ENCODE measurements at regions of chrX and their contacts with region 1.

Region 1: GRCh38 chrX:68710870-68711576 is 63.6 kb downstream of the STARD8 start:
- DNase-seq: peak; percentile 53
- ATAC-seq: peak; percentile 70
- H3K4me3 ChIP-seq: no peak overlapping the region
- H3K27ac ChIP-seq: no peak overlapping the region
- H3K4me1 ChIP-seq: no peaks in the 10 kb centered on the region
- H3K27me3 ChIP-seq: peaks cover 22% of the 10 kb centered on the region; the same call in 1 of the 2 replicates
- CTCF ChIP-seq: peak; percentile 57
- POLR2A ChIP-seq: no peak
- RAD21 ChIP-seq: peak; percentile 76

Region 2: DNA sequence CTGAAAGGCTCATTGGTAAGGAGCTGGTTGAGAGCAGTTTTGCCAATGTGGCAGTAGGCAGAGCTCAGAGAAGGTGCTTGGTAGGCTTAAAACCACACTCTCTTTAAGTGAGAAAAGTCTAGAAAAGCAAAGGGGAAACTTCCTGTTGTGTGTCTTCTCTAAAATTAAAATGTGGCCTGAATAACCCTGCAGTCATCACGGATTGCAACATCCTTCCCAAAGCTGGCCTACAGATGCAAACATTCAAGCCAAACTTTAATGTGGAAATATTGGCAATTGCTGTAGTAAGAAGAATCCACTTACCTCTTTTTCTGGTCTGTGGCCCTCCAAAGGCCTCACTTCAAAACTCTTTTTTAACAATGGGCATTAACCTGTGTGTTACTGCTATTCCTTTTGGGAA is 626.3 kb before region 1 on chrX:
- CTCF ChIA-PET with region 1: no interaction called
- POLR2A ChIA-PET with region 1: no interaction called
- dilution Hi-C with region 1: no loop called
- in situ Hi-C with region 1: no loop called
- intact Hi-C with region 1: no loop called
- DNase-seq: peak; percentile 55
- ATAC-seq: no peak
- H3K4me3 ChIP-seq: no peak overlapping the region
- H3K27ac ChIP-seq: peak overlapping the region; percentile 58; the same call in 1 of the 2 replicates
- H3K4me1 ChIP-seq: peaks cover 2% of the 10 kb centered on the region; the same call in 1 of the 2 replicates
- H3K27me3 ChIP-seq: no peaks in the 10 kb centered on the region
- CTCF ChIP-seq: no peak
- POLR2A ChIP-seq: no peak
- RAD21 ChIP-seq: no peak

Region 3: GRCh38 chrX:68183612-68184214 is 527.3 kb before region 1 on chrX:
- CTCF ChIA-PET with region 1: no interaction called
- POLR2A ChIA-PET with region 1: no interaction called
- dilution Hi-C with region 1: no loop called
- in situ Hi-C with region 1: loop called (anchors 25 kb)
- intact Hi-C with region 1: loop called (anchors 5 kb)
- DNase-seq: peak; percentile 51
- ATAC-seq: peak; percentile 75
- H3K4me3 ChIP-seq: no peak overlapping the region
- H3K27ac ChIP-seq: no peak overlapping the region
- H3K4me1 ChIP-seq: peaks cover 2% of the 10 kb centered on the region; the same call in 1 of the 2 replicates
- H3K27me3 ChIP-seq: no peaks in the 10 kb centered on the region; the same call in 1 of the 2 replicates
- CTCF ChIP-seq: peak; percentile 55
- POLR2A ChIP-seq: no peak
- RAD21 ChIP-seq: peak; percentile 55

Region 4: DNA sequence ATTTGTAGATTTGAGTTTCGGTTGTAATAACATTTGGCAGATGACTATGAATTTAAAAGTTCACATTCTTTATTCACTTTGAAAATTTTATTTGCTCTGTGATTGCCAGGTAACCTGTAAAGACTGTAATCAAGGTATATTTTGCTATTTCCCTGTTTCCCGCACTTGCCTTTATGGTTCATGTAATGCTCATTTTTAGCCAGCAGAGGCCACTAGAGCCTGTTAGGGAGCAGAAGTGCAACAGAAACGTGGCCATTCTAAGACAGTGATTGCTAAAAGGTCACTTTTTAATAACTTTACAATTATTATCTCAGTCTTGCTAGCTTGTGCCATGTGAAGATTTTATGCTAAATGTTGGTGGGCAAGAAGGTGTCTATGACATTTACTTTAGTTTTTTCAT is 199.8 kb before region 1 on chrX:
- CTCF ChIA-PET with region 1: no interaction called
- POLR2A ChIA-PET with region 1: no interaction called
- dilution Hi-C with region 1: no loop called
- in situ Hi-C with region 1: loop called (anchors 10 kb)
- intact Hi-C with region 1: loop called (anchors 1 kb)
- DNase-seq: peak; percentile 48
- ATAC-seq: peak; percentile 86
- H3K4me3 ChIP-seq: no peak overlapping the region
- H3K27ac ChIP-seq: no peak overlapping the region
- H3K4me1 ChIP-seq: no peaks in the 10 kb centered on the region
- H3K27me3 ChIP-seq: no peaks in the 10 kb centered on the region
- CTCF ChIP-seq: peak; percentile 77
- POLR2A ChIP-seq: no peak
- RAD21 ChIP-seq: peak; percentile 74

Measured in IMR-90 (cell line).